ENCODE measurements at regions of chr5 and their contacts with region 1.

Region 1: DNA sequence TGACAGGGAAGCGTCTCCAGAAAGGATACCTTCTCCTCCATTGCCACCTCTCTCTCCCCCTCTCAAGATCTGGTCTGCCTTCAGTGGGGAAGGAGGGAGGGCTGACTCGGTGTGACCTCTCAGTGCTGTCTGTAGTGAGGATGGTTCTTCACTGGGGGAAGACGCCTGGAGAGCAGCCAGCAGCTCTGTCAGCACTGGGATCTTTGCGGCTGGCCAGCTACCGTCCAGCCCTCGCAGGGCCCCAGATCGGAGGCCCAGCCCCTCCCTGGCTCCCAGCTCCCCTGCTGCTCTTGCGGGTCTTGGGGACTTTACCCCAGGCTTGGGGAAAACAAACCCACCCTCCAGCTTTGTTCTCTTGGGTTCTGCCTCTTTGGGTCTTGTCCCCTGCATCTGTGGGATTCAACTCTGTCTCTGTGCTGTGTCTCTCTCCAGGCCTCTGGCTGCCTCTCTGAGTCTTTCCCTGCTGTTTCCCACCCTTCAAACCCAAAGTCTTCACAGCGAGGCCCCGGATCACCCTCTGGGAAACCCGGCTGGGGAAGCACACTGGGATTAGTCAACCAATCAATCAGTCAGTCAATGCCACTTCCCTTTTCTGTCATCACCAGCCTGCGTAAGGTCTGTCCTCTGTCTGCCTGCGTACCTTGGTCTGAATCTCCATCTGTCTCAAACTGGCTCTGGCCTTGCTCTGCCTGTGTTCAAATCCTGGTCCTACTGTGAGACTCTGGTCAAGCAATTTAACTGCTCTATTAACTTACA is 23.0 kb downstream of the FGF18 start:
- DNase-seq: no peak
- ATAC-seq: no peak
- H3K4me3 ChIP-seq: no peak overlapping the region
- H3K27ac ChIP-seq: no peak overlapping the region
- H3K4me1 ChIP-seq: no peaks in the 10 kb centered on the region
- H3K27me3 ChIP-seq: no peaks in the 10 kb centered on the region
- CTCF ChIP-seq: no peak

Region 2: GRCh38 chr5:171093598-171093997 is 348.9 kb before region 1 on chr5:
- CTCF ChIA-PET with region 1: no interaction called
- POLR2A ChIA-PET with region 1: no interaction called
- in situ Hi-C with region 1: no loop called
- intact Hi-C with region 1: no loop called
- DNase-seq: no peak
- ATAC-seq: no peak
- H3K4me3 ChIP-seq: no peak overlapping the region
- H3K27ac ChIP-seq: no peak overlapping the region
- H3K4me1 ChIP-seq: no peaks in the 10 kb centered on the region
- H3K27me3 ChIP-seq: no peaks in the 10 kb centered on the region
- CTCF ChIP-seq: no peak

Region 3: DNA sequence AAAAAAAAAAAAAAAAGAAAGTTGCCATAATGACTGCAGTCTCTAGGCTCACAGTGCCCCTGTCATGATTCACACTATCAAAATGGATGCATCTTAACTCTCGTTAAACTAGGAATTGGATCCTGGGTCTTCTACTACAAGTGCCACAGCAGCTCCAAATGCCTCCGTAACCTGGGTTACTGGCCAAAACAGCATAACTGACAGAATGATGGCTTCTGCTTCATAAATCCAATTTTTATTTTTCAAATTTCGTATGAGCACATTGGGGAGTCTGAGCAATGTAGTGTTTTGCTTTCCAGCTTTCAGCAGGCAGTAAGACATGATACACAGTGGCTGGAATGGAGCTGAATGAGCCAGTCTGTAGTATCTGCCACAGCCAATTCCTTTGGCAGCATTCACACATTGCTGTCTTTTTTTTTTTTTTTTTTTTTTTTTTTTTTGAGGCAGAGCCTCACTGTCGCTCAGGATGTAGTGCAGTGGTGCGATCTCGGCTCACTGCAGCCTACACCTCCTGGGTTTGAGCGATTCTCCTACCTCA is 90.9 kb before region 1 on chr5:
- CTCF ChIA-PET with region 1: no interaction called
- POLR2A ChIA-PET with region 1: no interaction called
- in situ Hi-C with region 1: no loop called
- intact Hi-C with region 1: no loop called
- DNase-seq: no peak
- ATAC-seq: no peak
- H3K4me3 ChIP-seq: no peak overlapping the region
- H3K27ac ChIP-seq: no peak overlapping the region
- H3K4me1 ChIP-seq: no peaks in the 10 kb centered on the region
- H3K27me3 ChIP-seq: no peaks in the 10 kb centered on the region
- CTCF ChIP-seq: no peak

Region 4: DNA sequence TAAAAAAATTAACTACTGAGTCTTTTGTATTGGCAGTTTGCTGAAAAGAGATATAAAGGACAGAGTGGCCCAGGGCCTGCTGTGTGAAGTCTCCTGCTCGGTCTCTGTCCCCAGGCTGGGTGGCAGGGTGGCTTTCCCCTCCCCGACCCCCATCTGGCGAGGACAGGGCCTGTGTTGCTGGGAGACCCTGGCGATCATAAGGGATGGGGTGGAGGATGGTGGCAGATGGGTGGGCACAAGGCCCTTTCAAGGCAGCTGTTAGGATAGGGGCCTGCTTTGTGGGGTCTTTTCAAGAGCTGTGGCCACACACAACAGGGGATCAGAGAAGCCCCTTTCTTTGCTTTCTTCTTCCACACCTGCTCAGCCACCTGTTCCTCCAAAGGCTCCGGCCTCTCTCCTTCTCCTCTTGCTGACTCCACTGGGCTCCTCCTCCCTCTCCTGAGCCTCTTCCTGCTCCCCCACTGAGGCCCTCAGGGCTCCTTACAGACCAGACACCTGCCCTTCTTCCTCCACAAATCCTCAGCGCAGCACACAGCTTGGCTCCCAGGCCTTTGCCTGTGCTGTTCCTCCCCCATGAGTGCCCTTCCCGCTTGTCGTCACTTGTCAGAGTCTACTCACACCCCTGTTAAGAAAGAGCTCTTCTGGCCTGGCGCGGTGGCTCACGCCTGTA is 1183.6 kb after region 1 on chr5:
- CTCF ChIA-PET with region 1: no interaction called
- POLR2A ChIA-PET with region 1: interaction called, 13 read pairs
- in situ Hi-C with region 1: no loop called
- intact Hi-C with region 1: no loop called
- DNase-seq: no peak
- ATAC-seq: no peak
- H3K4me3 ChIP-seq: no peak overlapping the region
- H3K27ac ChIP-seq: no peak overlapping the region
- H3K4me1 ChIP-seq: no peaks in the 10 kb centered on the region
- H3K27me3 ChIP-seq: no peaks in the 10 kb centered on the region; the same call in 1 of the 2 replicates
- CTCF ChIP-seq: no peak